ENCODE measurements at regions of chr18 and their contacts with region 1.

Region 1: GRCh38 chr18:3665780-3666525 is 216.0 kb downstream of the TGIF1 start:
- DNase-seq: peak; percentile 65 to 93
- ATAC-seq: peak; percentile 90 to 94
- H3K4me3 ChIP-seq: peak overlapping the region; percentile 14; the same call in 1 of the 3 replicates
- H3K27ac ChIP-seq: peak overlapping the region; percentile 87 to 91
- H3K4me1 ChIP-seq: peaks cover 50% of the 10 kb centered on the region
- CTCF ChIP-seq: peak; percentile 76
- EP300 ChIP-seq: peak; percentile 64 to 74; a peak in 4 of 5 replicates
- POLR2A ChIP-seq: no peak
- RAD21 ChIP-seq: peak; percentile 92 to 95

Region 2: DNA sequence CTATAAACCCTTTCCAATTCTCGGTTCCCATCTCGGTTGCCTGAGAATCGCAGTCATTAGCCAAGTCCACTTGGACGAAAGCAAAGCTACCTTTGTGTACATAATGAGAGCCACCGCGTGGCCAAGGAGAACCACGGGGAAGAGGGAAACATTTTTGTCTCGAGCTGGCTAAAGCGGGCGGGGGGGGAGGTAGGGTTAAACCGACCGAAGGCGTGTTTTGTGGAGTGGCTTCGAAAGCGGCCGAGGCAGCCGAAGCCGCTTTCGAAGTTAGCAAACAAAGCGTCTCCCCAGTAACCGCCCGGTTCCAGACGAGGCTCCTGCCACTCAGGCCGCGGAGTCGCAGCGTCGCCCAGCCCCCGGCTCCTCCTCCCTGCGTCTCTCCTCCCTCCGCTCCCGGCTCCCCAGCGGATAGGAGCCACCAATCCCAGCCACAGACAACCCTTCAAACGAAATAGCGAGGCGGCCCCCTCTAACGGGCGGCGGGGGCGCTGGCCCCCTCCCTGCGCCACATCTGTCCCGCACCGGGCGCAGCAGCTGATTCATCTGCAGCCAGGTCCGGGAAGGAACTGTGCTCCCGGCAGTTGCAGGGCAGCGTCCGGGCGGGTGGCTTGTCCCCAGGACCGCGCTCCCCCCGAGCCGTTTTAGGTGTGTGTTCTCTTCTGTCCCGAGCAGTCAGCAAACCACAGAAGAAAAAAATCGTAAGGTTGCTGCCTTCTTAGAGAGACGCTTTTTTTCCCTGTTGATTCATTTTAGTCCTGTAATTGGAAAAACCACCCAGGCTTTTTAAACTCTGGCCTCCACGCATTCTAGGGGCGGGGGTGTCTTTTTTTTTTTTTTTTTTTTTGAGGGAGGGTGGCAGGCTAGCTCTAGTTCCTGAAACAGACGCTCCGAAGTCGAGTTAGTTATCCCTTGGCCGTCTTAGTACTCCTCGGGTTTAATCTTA is 217.8 kb before region 1 on chr18:
- CTCF ChIA-PET with region 1: interaction called, 109 read pairs
- POLR2A ChIA-PET with region 1: interaction called, 39 read pairs
- DNase-seq: peak; percentile 56 to 95
- ATAC-seq: peak; percentile 76 to 80
- H3K4me3 ChIP-seq: peak overlapping the region; percentile 93
- H3K27ac ChIP-seq: peak overlapping the region; percentile 98 to 100
- H3K4me1 ChIP-seq: peaks cover 25% of the 10 kb centered on the region
- CTCF ChIP-seq: peak; percentile 19; the same call in 1 of the 3 replicates
- EP300 ChIP-seq: peak in 1 of 2 experiments; percentile 27; a peak in 1 of 5 replicates
- POLR2A ChIP-seq: peak; percentile 57
- RAD21 ChIP-seq: peak in 1 of 2 experiments; percentile 31; a peak in 2 of 5 replicates

Region 3: DNA sequence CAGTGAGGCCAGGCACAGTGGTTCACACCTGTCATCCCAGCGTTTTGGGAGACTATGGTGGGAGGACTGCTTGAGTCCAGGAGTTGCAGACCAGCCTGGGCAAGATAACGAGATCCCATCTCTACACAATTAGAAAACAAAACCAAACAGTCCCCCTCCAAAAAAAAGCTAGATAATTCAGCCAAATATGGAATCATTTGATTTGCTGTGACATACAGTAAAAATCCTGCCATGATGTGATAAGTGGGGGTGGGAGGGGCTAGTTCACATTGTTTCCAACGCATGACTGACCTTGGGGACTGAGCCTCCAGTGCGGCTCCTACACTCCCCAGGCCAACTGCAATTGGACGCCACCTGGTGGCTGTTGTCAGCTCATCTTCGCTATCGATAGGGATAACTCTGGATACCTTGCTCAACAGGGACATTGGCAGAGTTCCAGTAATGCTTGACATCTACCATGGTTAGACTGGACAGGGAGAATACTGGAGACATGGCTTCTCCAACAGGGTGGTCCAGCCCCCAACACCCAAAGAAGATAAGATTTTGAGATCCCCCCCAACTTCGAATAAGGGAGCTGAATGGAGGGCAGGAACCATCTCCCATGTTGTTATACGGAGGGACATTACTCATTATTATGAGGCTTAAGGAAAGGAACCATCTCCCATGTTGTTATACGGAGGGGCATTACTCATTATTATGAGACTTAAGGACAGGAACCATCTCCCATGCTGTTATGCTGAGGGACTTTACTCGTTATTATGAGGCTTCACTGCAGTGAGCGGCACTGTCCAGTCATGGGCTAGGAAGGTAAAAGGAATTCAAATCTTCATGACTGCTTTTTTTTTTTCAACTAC is 80.1 kb before region 1 on chr18:
- CTCF ChIA-PET with region 1: interaction called, 25 read pairs
- POLR2A ChIA-PET with region 1: no interaction called
- DNase-seq: peak; percentile 64 to 89
- ATAC-seq: peak; percentile 95 to 96
- H3K4me3 ChIP-seq: no peak overlapping the region
- H3K27ac ChIP-seq: peak overlapping the region; percentile 63 to 77
- H3K4me1 ChIP-seq: peaks cover 34% of the 10 kb centered on the region
- CTCF ChIP-seq: peak; percentile 55
- EP300 ChIP-seq: no peak
- POLR2A ChIP-seq: no peak
- RAD21 ChIP-seq: peak; percentile 70 to 76

Region 4: GRCh38 chr18:3604498-3605408 is 61.2 kb before region 1 on chr18:
- CTCF ChIA-PET with region 1: interaction called, 136 read pairs
- POLR2A ChIA-PET with region 1: interaction called, 73 read pairs
- DNase-seq: peak in 1 of 2 experiments; percentile 94
- ATAC-seq: peak; percentile 48 to 60
- H3K4me3 ChIP-seq: peak overlapping the region; percentile 46
- H3K27ac ChIP-seq: peak overlapping the region; percentile 99 to 100
- H3K4me1 ChIP-seq: peaks cover 58% of the 10 kb centered on the region
- CTCF ChIP-seq: no peak
- EP300 ChIP-seq: peak; percentile 87 to 95; a peak in 4 of 5 replicates
- POLR2A ChIP-seq: no peak
- RAD21 ChIP-seq: no peak; a peak in 1 of 5 replicates

Region 5: GRCh38 chr18:3623769-3624545 is 42.0 kb before region 1 on chr18:
- CTCF ChIA-PET with region 1: interaction called, 68 read pairs
- POLR2A ChIA-PET with region 1: interaction called, 69 read pairs
- DNase-seq: peak; percentile 69 to 99
- ATAC-seq: peak; percentile 86 to 87
- H3K4me3 ChIP-seq: peak overlapping the region; percentile 32; the same call in 2 of the 3 replicates
- H3K27ac ChIP-seq: peak overlapping the region; percentile 99 to 100
- H3K4me1 ChIP-seq: peaks cover 60% of the 10 kb centered on the region
- CTCF ChIP-seq: no peak
- EP300 ChIP-seq: peak; percentile 95 to 99
- POLR2A ChIP-seq: peak; percentile 42; the same call in 1 of the 2 replicates
- RAD21 ChIP-seq: peak; percentile 20 to 38; a peak in 4 of 5 replicates

Region 6: GRCh38 chr18:3645384-3646156 is 20.4 kb before region 1 on chr18:
- CTCF ChIA-PET with region 1: interaction called, 61 read pairs
- POLR2A ChIA-PET with region 1: interaction called, 63 read pairs
- DNase-seq: no peak
- ATAC-seq: no peak
- H3K4me3 ChIP-seq: no peak overlapping the region
- H3K27ac ChIP-seq: peak overlapping the region; percentile 47 to 100; a peak in 5 of 6 replicates
- H3K4me1 ChIP-seq: peaks cover 31% of the 10 kb centered on the region
- CTCF ChIP-seq: no peak
- EP300 ChIP-seq: no peak
- POLR2A ChIP-seq: no peak
- RAD21 ChIP-seq: no peak

Region 7: GRCh38 chr18:3869848-3870247 is 203.9 kb after region 1 on chr18:
- CTCF ChIA-PET with region 1: interaction called, 12 read pairs
- POLR2A ChIA-PET with region 1: no interaction called
- DNase-seq: peak; percentile 19 to 77
- ATAC-seq: peak; percentile 71 to 82; a peak in 4 of 6 replicates
- H3K4me3 ChIP-seq: no peak overlapping the region
- H3K27ac ChIP-seq: peak overlapping the region; percentile 11 to 76; a peak in 3 of 6 replicates
- H3K4me1 ChIP-seq: peaks cover 11% of the 10 kb centered on the region; the same call in 2 of the 3 replicates
- CTCF ChIP-seq: peak; percentile 52
- EP300 ChIP-seq: no peak
- POLR2A ChIP-seq: no peak
- RAD21 ChIP-seq: peak; percentile 78 to 80

Region 8: GRCh38 chr18:3923750-3924149 is 257.8 kb after region 1 on chr18:
- CTCF ChIA-PET with region 1: no interaction called
- POLR2A ChIA-PET with region 1: no interaction called
- DNase-seq: peak in 1 of 2 experiments; percentile 6
- ATAC-seq: 0 out of 6 replicates have a peak, but pooled peaks of 1 of the 2 experiments have one; percentile 38
- H3K4me3 ChIP-seq: no peak overlapping the region
- H3K27ac ChIP-seq: peak overlapping the region in 1 of 2 experiments; percentile 62; a peak in 3 of 6 replicates
- H3K4me1 ChIP-seq: peaks cover 12% of the 10 kb centered on the region
- CTCF ChIP-seq: no peak
- EP300 ChIP-seq: no peak
- POLR2A ChIP-seq: no peak
- RAD21 ChIP-seq: no peak